Mammary epithelial cell (primary cell): ENCODE measurements at regions of chr19 and their contacts with region 1.

Region 1: GRCh38 chr19:38577826-38578225 is 39.9 kb downstream of the MAP4K1 start:
- DNase-seq: no peak
- H3K4me3 ChIP-seq: no peak overlapping the region
- H3K27ac ChIP-seq: no peak overlapping the region
- H3K4me1 ChIP-seq: peaks cover 8% of the 10 kb centered on the region
- H3K27me3 ChIP-seq: no peaks in the 10 kb centered on the region
- CTCF ChIP-seq: no peak

Region 2: GRCh38 chr19:38596057-38596981 is 18.5 kb after region 1 on chr19:
- CTCF ChIA-PET with region 1: no interaction called
- dilution Hi-C with region 1: no loop called
- in situ Hi-C with region 1: no loop called
- intact Hi-C with region 1: no loop called
- DNase-seq: no peak
- H3K4me3 ChIP-seq: peak overlapping the region in 2 of 3 experiments; percentile 18 to 30
- H3K27ac ChIP-seq: no peak overlapping the region
- H3K4me1 ChIP-seq: peaks cover 5% of the 10 kb centered on the region
- H3K27me3 ChIP-seq: no peaks in the 10 kb centered on the region
- CTCF ChIP-seq: no peak

Region 3: GRCh38 chr19:38618590-38619360 is 40.9 kb after region 1 on chr19 and contains the start of gene EIF3K:
- CTCF ChIA-PET with region 1: no interaction called
- dilution Hi-C with region 1: no loop called
- in situ Hi-C with region 1: no loop called
- intact Hi-C with region 1: loop called (anchors 2 kb)
- DNase-seq: peak; percentile 98
- H3K4me3 ChIP-seq: peak within 1 kb of the TSS; percentile 80 to 90 (median 88)
- H3K27ac ChIP-seq: peak within 1 kb of the TSS; percentile 80
- H3K4me1 ChIP-seq: peaks cover 18% of the 10 kb centered on the region
- H3K27me3 ChIP-seq: no peaks in the 10 kb centered on the region
- CTCF ChIP-seq: no peak
- total RNA-seq, gene EIF3K: 237 to 319 TPM